ENCODE measurements at regions of chr22 and their contacts with region 1.

Region 1: GRCh38 chr22:39395936-39396796 is 3.4 kb upstream of the TAB1 start:
- DNase-seq: no peak
- ATAC-seq: no peak

Region 2: DNA sequence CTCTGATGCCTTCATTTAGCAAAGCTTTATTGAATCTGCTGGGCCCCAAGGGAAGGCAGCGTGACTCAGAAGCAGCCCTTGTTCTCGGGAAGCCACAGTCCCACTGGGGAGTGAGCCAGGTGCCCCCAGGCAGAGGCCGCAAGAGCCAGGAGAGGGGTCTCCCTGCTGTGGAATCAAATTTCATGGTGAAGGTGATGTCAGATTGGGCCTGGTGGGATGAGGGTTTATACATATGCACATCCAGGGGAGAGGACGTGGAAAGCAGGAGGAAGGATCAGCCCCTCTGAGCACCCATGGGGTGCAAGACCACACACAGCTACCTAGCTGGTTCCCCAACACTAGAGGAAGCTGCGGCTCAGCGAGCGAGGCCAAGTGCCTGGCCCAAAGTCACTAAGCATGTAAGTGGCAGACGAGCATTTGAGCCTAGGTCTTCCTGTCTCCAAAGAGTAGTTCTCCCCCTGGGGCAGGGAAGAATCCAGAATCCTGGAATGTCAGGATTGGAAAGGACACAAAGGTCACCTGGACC is 44.4 kb before region 1 on chr22:
- intact Hi-C with region 1: no loop called
- DNase-seq: no peak
- ATAC-seq: no peak

Region 3: DNA sequence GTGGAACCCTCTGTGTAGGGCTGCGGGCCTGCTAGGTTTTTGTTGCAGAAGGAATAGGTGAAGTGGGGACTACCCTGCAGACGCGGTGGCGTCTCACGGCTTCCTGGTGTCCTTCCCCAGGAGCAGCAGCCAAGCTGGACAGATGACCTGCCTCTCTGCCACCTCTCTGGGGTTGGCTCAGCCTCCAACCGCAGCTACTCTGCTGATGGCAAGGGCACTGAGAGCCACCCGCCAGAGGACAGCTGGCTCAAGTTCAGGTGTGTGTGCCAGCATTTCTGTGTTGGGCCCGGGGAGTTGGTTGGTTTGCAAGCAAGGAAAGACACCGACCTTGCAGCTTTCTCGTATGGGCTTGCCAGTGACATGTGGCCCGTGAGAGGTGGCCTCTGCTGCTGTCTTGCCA is 18.7 kb after region 1 on chr22:
- intact Hi-C with region 1: no loop called
- DNase-seq: no peak
- ATAC-seq: peak; percentile 83

Region 4: GRCh38 chr22:39502109-39502788 is 106.1 kb after region 1 on chr22 and contains the start of gene MIEF1:
- intact Hi-C with region 1: loop called (anchors 5 kb)
- DNase-seq: peak; percentile 99
- ATAC-seq: peak; percentile 98
- total RNA-seq, gene MIEF1: 17.3 TPM

Region 5: DNA sequence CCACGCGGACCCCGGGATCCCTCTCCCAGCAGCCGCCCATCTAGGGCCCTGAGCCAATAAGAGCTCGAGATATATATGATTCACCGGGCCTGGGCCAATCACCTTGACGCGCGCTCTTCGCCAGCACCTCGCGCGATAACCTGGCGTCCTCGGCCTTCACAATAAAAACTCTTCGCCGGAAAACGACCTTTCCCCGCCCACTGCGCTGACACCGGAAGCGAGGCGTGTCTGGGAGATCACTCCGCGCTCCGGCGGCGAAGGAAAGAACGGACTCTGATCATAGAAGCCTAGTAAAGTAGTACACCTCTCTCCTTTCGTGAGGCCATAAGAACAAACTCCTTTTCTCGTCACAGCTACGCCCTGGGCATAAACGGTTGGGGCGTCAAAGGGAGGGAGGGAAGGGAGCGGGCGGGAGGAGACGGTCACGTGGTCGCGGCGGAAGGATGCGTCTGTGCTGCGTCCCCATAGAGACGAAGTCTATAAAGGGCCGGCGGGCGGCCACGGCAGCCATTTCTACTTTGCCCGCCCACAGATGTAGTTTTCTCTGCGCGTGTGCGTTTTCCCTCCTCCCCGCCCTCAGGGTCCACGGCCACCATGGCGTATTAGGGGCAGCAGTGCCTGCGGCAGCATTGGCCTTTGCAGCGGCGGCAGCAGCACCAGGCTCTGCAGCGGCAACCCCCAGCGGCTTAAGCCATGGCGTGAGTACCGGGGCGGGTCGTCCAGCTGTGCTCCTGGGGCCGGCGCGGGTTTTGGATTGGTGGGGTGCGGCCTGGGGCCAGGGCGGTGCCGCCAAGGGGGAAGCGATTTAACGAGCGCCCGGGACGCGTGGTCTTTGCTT is 124.1 kb after region 1 on chr22 and contains the start of gene ATF4:
- intact Hi-C with region 1: loop called (anchors 1 kb)
- DNase-seq: peak; percentile 99
- ATAC-seq: peak; percentile 88
- total RNA-seq, gene ATF4: 204 TPM

Region 6: DNA sequence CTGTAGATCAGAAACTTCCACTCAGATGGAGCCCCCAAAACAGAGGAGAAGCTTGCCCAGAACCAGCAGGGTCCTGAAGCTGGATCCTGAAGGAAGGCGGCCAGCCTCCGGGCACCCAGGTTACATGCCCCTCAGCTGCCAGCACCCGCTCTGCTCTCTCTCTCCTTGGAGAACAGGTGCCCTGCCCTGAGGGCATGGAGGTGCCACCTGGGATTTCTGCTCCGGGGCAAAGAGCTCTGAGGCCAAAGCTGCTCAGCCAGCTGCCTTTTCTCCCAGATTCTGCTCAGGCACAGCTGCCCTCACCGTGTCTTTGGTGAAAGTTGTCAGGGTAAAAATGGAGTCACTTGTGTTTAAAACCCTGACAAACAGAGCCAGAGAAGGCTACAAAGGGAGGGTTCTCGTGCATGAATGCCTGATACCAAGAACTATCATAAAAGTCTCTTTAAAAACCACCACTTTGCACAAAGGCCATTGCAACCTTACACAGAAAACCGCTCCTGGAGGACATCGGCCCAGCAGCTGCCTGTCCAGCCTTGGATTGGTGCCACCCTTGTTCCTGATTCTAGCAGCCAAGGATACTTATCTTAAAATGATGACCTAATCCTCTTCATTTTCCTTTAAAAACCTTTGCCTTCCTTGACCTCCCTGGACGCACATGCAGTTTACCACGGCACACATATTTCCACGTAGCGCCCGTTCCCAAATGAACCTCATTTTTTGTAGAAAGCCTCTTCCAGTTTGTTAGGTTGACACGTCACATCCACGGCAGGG is 314.4 kb after region 1 on chr22:
- intact Hi-C with region 1: no loop called
- DNase-seq: peak; percentile 43
- ATAC-seq: peak; percentile 54